ENCODE measurements at regions of chr1 and their contacts with region 1.

Region 1: GRCh38 chr1:247156787-247157232 is 15.0 kb downstream of the ZNF124 start:
- H3K4me3 Mint-ChIP-seq: no peak overlapping the region
- H3K27ac Mint-ChIP-seq: no peak overlapping the region
- H3K4me1 Mint-ChIP-seq: no peaks in the 10 kb centered on the region
- H3K27me3 Mint-ChIP-seq: no peaks in the 10 kb centered on the region

Region 2: GRCh38 chr1:247198781-247199180 is 42.0 kb after region 1 on chr1:
- intact Hi-C with region 1: loop called (anchors 5 kb)
- H3K4me3 Mint-ChIP-seq: no peak overlapping the region
- H3K27ac Mint-ChIP-seq: no peak overlapping the region
- H3K4me1 Mint-ChIP-seq: no peaks in the 10 kb centered on the region
- H3K27me3 Mint-ChIP-seq: no peaks in the 10 kb centered on the region